A549 (cell line): ENCODE measurements at regions of chr4 and their contacts with region 1.

Region 1: DNA sequence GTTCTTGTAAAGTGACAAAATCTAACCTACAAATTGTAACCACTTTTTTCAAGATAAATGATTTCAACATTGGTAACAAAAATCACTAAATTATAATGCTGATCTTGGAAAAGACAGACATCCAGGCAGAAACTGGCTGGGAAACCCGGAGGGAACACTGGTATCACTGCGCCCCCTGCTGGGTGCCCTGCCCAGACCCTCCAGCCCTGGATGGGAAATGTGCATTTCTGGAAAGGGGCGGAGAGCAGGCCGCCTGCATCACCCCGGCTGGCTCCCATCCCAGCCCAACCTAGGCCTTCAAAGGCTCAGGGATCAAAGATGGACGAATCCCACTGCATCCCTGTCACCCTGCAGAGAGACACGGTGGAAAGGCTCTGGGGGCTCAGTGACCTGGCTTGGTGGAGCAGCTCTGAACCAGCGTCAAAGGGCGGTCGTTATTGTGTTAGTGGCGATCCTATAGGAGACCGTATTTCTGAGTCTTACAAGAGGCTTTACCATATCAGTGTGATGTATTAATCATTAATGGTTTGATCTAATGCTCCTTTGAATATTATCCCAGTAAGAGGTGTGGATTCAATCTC is 37.3 kb downstream of the ACOX3 start:
- DNase-seq: peak; percentile 66 to 81
- ATAC-seq: peak; percentile 90 to 96
- H3K4me3 ChIP-seq: no peak overlapping the region
- H3K27ac ChIP-seq: no peak overlapping the region
- H3K4me1 ChIP-seq: peaks cover 3% of the 10 kb centered on the region; the same call in 1 of the 3 replicates
- CTCF ChIP-seq: peak; percentile 81
- EP300 ChIP-seq: no peak
- POLR2A ChIP-seq: no peak
- RAD21 ChIP-seq: peak; percentile 93 to 96

Region 2: DNA sequence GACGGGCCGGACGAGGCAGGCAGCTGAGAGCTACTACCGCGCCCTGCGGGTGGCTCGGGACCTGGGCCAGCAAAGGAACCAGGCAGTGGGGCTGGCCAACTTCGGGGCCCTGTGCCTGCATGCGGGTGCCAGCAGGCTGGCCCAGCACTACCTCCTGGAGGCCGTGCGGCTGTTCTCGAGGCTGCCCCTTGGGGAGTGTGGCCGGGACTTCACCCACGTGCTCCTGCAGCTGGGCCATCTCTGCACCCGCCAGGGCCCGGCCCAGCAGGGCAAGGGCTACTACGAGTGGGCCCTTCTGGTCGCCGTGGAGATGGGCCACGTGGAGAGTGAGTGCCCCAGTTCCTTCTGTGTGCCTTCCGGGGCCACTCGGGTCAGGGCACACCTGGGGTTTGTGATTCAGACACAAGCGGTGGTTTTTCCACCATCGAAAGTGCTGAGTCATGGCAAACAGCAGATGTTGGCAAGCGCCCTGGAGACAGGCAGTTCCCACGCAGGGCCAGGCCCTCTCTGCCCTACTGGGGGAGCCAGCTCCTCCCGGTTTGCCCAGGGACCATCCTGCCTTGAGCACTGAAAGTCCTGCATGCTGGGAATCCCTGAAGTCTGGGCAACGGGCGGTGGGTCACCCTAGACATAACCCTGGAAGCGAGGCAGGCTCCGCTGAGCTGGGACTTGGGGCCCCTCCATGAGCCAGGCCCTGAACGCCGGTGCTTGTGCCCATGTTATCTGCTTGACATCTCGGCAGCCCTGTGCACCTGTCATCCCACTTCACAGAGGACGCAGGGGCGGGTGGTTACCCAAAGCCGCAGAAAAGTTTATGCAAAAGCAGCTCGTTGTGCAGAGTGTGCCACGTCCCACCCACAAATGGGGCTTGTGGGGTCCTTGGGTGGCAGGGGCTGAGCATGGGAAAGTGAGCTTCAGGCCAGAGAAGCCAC is 174.7 kb before region 1 on chr4:
- CTCF ChIA-PET with region 1: interaction called, 20 read pairs
- POLR2A ChIA-PET with region 1: no interaction called
- DNase-seq: peak; percentile 26 to 82
- ATAC-seq: peak; percentile 57 to 70; a peak in 5 of 6 replicates
- H3K4me3 ChIP-seq: no peak overlapping the region
- H3K27ac ChIP-seq: peak overlapping the region; percentile 84 to 97
- H3K4me1 ChIP-seq: peaks cover 35% of the 10 kb centered on the region
- CTCF ChIP-seq: no peak
- EP300 ChIP-seq: 0 out of 5 replicates have a peak, but pooled peaks of 1 of the 2 experiments have one; percentile 31
- POLR2A ChIP-seq: no peak
- RAD21 ChIP-seq: no peak

Region 3: GRCh38 chr4:8267077-8267476 is 136.2 kb before region 1 on chr4:
- CTCF ChIA-PET with region 1: interaction called, 88 read pairs
- POLR2A ChIA-PET with region 1: no interaction called
- DNase-seq: peak; percentile 69 to 70
- ATAC-seq: peak; percentile 69 to 88
- H3K4me3 ChIP-seq: no peak overlapping the region
- H3K27ac ChIP-seq: peak overlapping the region in 1 of 2 experiments; percentile 52; a peak in 2 of 6 replicates
- H3K4me1 ChIP-seq: peaks cover 16% of the 10 kb centered on the region; the same call in 1 of the 3 replicates
- CTCF ChIP-seq: peak; percentile 58
- EP300 ChIP-seq: no peak
- POLR2A ChIP-seq: no peak
- RAD21 ChIP-seq: peak; percentile 74 to 76

Region 4: GRCh38 chr4:8384397-8385060 is 18.7 kb before region 1 on chr4:
- CTCF ChIA-PET with region 1: interaction called, 28 read pairs
- POLR2A ChIA-PET with region 1: no interaction called
- DNase-seq: no peak
- ATAC-seq: no peak
- H3K4me3 ChIP-seq: no peak overlapping the region
- H3K27ac ChIP-seq: no peak overlapping the region
- H3K4me1 ChIP-seq: peaks cover 16% of the 10 kb centered on the region
- CTCF ChIP-seq: no peak
- EP300 ChIP-seq: no peak
- POLR2A ChIP-seq: no peak
- RAD21 ChIP-seq: no peak

Region 5: DNA sequence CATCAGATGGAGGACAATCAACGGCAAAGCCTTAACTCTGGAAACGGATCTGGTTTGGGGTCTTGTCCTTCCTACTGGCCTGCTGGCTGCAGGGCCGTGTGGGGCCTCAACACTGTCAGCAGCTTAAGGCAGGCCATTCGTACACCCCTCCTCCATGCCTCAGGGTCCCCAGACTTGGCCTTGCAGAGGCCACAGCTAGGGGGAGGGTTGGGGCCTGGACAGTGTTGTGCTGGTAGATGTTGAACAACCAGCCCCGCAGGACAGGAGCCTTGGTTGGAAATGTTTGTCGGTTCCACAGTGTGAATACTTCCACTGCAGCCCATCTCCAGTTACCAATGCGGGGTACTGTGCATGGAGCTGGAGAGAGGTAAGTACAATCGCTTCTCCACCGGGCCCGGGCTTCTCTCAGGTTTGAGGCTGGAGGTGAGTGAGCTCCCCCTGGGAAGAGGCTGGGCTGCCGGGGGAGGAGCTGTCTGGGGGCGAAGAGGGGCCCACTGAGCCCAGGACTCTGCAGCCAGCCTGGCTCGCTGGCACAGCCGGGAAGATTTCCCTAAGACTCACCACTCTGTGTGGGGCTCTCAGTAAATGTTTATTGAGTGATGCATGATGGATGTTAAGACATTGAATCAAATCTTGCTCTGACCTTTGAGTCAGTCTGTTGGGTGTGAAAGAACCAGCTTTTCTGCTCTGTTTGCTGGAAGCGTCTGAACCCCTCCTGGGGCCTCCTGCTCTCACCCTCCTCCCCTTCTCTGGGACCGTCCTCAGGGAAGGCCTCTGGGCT is 157.2 kb after region 1 on chr4:
- CTCF ChIA-PET with region 1: no interaction called
- POLR2A ChIA-PET with region 1: no interaction called
- DNase-seq: peak in 1 of 2 experiments; percentile 19
- ATAC-seq: peak; percentile 70 to 84; a peak in 5 of 6 replicates
- H3K4me3 ChIP-seq: no peak overlapping the region
- H3K27ac ChIP-seq: peak overlapping the region in 1 of 2 experiments; percentile 45; a peak in 3 of 6 replicates
- H3K4me1 ChIP-seq: peaks cover 26% of the 10 kb centered on the region
- CTCF ChIP-seq: no peak
- EP300 ChIP-seq: no peak
- POLR2A ChIP-seq: no peak
- RAD21 ChIP-seq: no peak